T-cell (primary cell): ENCODE measurements at regions of chr9 and their contacts with region 1.

Region 1: GRCh38 chr9:128651798-128652197 is 4.8 kb downstream of the DYNC2I2 start:
- DNase-seq: no peak
- ATAC-seq: no peak
- H3K4me3 ChIP-seq: no peak overlapping the region
- H3K4me3 Mint-ChIP-seq: no peak overlapping the region
- H3K27ac ChIP-seq: no peak overlapping the region
- H3K27ac Mint-ChIP-seq: no peak overlapping the region
- H3K4me1 ChIP-seq: peaks cover 0 to 9% of the 10 kb centered on the region in 2 experiments
- H3K4me1 Mint-ChIP-seq: peaks cover 0 to 3% (median 1%) of the 10 kb centered on the region in 3 donors
- H3K27me3 ChIP-seq: no peaks in the 10 kb centered on the region
- H3K27me3 Mint-ChIP-seq: no peaks in the 10 kb centered on the region

Region 2: DNA sequence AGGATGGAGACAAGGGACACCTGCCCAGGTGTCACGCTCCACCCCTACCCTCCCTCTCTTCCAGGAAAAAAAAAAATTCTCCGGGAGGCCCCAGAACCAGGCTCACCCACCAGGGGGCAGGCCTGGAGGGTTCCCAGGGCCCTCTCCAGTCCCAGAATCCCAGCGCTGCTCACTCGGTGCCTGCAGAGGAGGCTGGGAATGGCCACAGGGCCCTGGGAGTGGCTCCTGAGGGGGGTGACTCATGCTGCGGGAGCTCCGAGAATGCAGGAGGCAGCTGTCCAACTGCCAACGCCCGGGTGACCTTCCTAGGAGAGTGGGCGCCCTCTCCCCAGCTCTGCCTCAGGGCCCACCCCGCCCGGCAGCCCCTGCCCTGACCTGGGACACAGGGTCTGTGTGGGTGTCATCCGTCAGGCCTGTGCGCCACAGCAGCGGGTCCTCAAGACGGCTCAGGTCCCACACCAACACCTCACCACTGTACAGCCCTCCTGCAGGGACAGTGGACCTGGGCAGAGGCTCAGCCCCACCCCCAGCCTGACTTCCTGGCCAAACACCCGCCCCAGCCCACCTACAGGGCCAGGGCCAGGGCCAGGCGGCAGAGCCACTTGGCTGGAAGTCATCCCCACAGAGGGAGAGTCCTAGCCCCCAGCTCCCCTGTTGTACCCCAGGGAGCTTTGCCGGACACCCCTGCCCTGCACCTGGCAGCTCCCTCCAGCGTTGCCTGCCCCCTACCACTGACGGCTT is 16.3 kb before region 1 on chr9:
- CTCF ChIA-PET with region 1: no interaction called
- POLR2A ChIA-PET with region 1: no interaction called
- DNase-seq: no peak
- ATAC-seq: peak in 3 of 4 experiments; percentile 13 to 32 (median 15)
- H3K4me3 ChIP-seq: no peak overlapping the region
- H3K4me3 Mint-ChIP-seq: no peak overlapping the region
- H3K27ac ChIP-seq: no peak overlapping the region
- H3K27ac Mint-ChIP-seq: no peak overlapping the region
- H3K4me1 ChIP-seq: no peaks in the 10 kb centered on the region
- H3K4me1 Mint-ChIP-seq: no peaks in the 10 kb centered on the region
- H3K27me3 ChIP-seq: no peaks in the 10 kb centered on the region
- H3K27me3 Mint-ChIP-seq: no peaks in the 10 kb centered on the region

Region 3: DNA sequence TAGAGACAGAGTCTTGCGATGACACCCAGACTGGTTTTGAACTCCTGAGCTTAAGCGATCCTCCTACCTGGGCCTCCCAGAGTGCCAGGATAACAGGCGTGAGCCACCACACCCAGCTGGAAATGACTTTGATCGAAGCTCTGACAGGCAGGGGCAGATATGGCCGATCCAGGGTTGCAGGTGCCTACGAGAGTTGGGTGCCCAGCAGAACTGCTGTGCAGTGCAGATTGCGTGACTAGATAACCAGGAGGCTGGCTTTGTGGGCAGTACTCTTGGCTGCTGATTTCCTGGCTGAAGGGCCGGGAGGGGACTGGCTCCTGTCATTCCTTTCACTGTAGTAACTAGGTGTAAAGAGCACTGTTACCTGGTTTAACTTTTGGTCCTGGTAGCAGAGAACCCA is 147.1 kb after region 1 on chr9:
- CTCF ChIA-PET with region 1: no interaction called
- POLR2A ChIA-PET with region 1: no interaction called
- DNase-seq: no peak
- ATAC-seq: no peak
- H3K4me3 ChIP-seq: no peak overlapping the region
- H3K4me3 Mint-ChIP-seq: no peak overlapping the region
- H3K27ac ChIP-seq: no peak overlapping the region
- H3K27ac Mint-ChIP-seq: no peak overlapping the region
- H3K4me1 ChIP-seq: no peaks in the 10 kb centered on the region
- H3K4me1 Mint-ChIP-seq: peaks cover 0 to 2% (median under 1%) of the 10 kb centered on the region in 3 donors
- H3K27me3 ChIP-seq: no peaks in the 10 kb centered on the region
- H3K27me3 Mint-ChIP-seq: no peaks in the 10 kb centered on the region

Region 4: GRCh38 chr9:128881901-128882681 is 230.3 kb after region 1 on chr9 and contains the starts of genes KYAT1 and LRRC8A:
- CTCF ChIA-PET with region 1: no interaction called
- POLR2A ChIA-PET with region 1: interaction called in 1 of 2 experiments, 11 read pairs
- DNase-seq: peak; percentile 95 to 99 (median 98)
- ATAC-seq: peak; percentile 94 to 96 (median 96)
- H3K4me3 ChIP-seq: peak within 1 kb of the TSS; percentile 85 to 93
- H3K4me3 Mint-ChIP-seq: peak within 1 kb of the TSS; percentile 94 to 98 (median 97)
- H3K27ac ChIP-seq: peak within 1 kb of the TSS; percentile 57
- H3K27ac Mint-ChIP-seq: peak within 1 kb of the TSS; percentile 94 to 97
- H3K4me1 ChIP-seq: peaks cover 16 to 53% of the 10 kb centered on the region in 2 experiments
- H3K4me1 Mint-ChIP-seq: peaks cover 56 to 66% (median 63%) of the 10 kb centered on the region in 3 donors
- H3K27me3 ChIP-seq: no peaks in the 10 kb centered on the region
- H3K27me3 Mint-ChIP-seq: no peaks in the 10 kb centered on the region
- total RNA-seq, gene KYAT1: 9.7 to 15.6 (median 11.7) TPM
- total RNA-seq, gene LRRC8A: 30.7 to 34.3 (median 33.9) TPM